CD8-positive, alpha-beta T cell (primary cell): ENCODE measurements at regions of chr2 and their contacts with region 1.

Region 1: DNA sequence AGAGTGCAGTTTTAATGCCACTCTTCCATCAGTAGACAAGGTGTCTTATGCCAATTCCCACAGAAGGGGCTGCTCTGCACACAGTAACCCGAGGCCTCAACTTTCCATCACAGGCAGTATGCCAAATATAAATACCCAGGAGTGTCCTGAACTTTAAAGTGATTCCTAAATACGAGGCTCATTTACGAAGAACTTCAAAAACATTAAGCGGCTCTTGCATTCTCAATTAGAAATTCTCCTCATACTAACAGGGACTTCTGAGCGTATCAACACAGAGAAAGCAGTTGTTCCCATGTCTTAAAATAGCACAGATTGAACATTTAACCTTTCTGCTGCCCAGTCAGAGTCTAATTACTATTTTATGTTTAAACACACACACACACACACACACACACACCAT is 638.6 kb downstream of the ERBB4 start:
- DNase-seq: no peak
- ATAC-seq: no peak
- H3K4me3 ChIP-seq: no peak overlapping the region
- H3K4me3 Mint-ChIP-seq: no peak overlapping the region
- H3K27ac ChIP-seq: no peak overlapping the region
- H3K27ac Mint-ChIP-seq: no peak overlapping the region
- H3K4me1 ChIP-seq: no peaks in the 10 kb centered on the region
- H3K4me1 Mint-ChIP-seq: no peaks in the 10 kb centered on the region
- H3K27me3 ChIP-seq: no peaks in the 10 kb centered on the region
- H3K27me3 Mint-ChIP-seq: no peaks in the 10 kb centered on the region
- CTCF ChIP-seq: no peak

Region 2: GRCh38 chr2:211468877-211469663 is 430.9 kb before region 1 on chr2:
- CTCF ChIA-PET with region 1: no interaction called
- POLR2A ChIA-PET with region 1: no interaction called
- intact Hi-C with region 1: no loop called
- DNase-seq: no peak
- ATAC-seq: no peak
- H3K4me3 ChIP-seq: no peak overlapping the region
- H3K4me3 Mint-ChIP-seq: no peak overlapping the region
- H3K27ac ChIP-seq: no peak overlapping the region
- H3K27ac Mint-ChIP-seq: no peak overlapping the region
- H3K4me1 ChIP-seq: no peaks in the 10 kb centered on the region
- H3K4me1 Mint-ChIP-seq: no peaks in the 10 kb centered on the region
- H3K27me3 ChIP-seq: no peaks in the 10 kb centered on the region
- H3K27me3 Mint-ChIP-seq: no peaks in the 10 kb centered on the region
- CTCF ChIP-seq: no peak

Region 3: DNA sequence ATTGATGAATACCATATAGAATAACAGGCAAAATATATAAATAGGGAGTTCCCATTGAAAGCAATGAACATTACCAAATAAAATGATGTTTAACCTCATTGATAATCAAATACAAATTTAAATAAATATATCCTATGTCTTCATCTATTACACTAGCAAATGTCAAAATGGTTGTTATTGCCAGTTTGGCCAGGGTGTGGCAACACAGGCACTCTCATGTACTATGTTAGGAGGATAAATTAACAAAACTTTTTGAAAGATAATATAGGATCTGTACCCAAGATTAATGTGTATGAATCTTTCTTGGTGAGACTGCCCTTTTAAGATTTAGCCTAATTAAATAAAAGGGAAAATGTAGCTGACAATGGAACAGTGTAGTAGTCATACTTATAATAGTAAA is 20.7 kb before region 1 on chr2:
- CTCF ChIA-PET with region 1: no interaction called
- POLR2A ChIA-PET with region 1: no interaction called
- intact Hi-C with region 1: loop called in 1 of 2 experiments (anchors 1 kb)
- DNase-seq: no peak
- ATAC-seq: no peak
- H3K4me3 ChIP-seq: no peak overlapping the region
- H3K4me3 Mint-ChIP-seq: no peak overlapping the region
- H3K27ac ChIP-seq: no peak overlapping the region
- H3K27ac Mint-ChIP-seq: no peak overlapping the region
- H3K4me1 ChIP-seq: no peaks in the 10 kb centered on the region
- H3K4me1 Mint-ChIP-seq: no peaks in the 10 kb centered on the region
- H3K27me3 ChIP-seq: no peaks in the 10 kb centered on the region
- H3K27me3 Mint-ChIP-seq: no peaks in the 10 kb centered on the region
- CTCF ChIP-seq: no peak